OCI-LY7 (cell line): ENCODE measurements at regions of chr1 and their contacts with region 1.

Region 1: DNA sequence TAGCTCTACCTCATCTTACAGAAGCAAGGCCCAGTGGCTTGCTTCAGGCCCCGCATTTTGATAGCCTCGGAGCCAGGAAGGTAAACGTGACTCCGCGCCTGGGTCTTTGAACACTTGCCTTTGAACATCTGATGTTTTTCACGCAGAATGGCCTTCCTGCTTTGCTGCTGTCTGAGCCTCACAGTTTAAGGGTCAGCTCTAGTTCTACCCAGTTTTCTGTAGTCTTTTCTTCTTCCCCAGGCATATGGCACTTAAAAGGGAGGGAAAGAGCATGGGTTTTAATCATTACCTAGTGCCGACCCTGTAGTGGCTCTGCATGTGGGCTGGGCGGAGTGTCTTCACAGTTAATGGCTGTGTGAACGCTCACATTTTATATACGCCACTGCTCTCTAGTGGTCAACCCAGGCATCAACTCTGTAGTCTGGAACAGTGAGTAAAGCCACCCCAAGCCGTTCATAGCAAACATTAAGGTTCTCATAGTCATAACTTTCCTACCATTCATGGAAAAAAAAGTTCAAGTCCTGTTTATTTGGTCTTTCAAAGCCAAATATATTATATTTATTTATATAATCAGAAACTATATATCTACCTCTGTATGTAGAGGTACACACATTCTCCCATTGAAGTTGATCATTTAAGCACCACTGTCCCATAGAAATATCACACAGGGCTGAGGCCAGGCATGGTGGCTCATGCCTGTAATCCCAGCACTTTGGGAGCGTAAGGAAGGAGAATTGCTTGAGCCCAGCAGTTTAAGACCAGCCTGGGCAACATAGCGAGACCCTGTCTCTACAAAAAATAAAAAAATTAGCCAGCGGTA is 78.1 kb downstream of the IER5 start:
- DNase-seq: peak; percentile 74
- H3K4me3 ChIP-seq: no peak overlapping the region
- H3K27ac ChIP-seq: no peak overlapping the region
- H3K4me1 ChIP-seq: no peaks in the 10 kb centered on the region
- CTCF ChIP-seq: peak; percentile 90

Region 2: DNA sequence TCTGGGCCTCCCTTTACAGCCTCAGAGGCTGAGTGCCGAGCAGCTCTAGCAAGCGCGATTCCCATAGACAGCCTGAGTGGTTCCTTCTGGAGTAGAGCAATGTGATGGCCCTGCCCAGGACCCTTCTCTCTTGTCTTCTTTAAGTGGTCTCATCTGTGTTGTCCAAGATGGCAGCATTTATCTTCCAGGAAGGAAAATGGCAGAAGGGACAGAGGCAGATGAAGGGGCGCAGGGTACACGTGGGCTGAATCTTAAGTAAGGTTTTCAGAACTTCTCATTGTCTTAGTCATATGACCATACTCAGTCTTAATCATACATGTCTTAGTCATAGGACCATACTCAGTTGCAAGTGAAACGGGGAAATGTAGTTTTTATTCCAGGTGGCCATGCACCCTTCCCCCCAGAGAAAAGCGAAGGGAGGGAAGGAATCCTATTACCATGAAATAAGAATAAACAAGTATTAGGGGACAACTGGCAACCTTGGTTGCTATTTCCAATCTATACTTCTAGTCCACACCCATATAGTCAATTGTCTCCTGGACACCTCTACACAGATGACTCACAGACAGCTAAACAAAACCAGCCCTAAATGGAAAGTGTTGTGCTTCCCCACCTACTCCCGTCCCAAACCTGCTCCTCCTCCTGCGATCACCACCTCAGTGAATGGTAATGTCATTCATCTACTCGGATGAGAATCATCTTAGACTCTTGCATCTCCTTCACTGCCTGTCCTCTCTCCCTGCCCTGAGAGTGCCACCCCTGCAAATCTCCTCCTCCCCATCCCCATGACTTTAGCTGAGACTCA is 594.6 kb before region 1 on chr1:
- CTCF ChIA-PET with region 1: no interaction called
- POLR2A ChIA-PET with region 1: no interaction called
- intact Hi-C with region 1: no loop called
- DNase-seq: no peak
- H3K4me3 ChIP-seq: no peak overlapping the region
- H3K27ac ChIP-seq: no peak overlapping the region
- H3K4me1 ChIP-seq: no peaks in the 10 kb centered on the region
- CTCF ChIP-seq: no peak

Region 3: DNA sequence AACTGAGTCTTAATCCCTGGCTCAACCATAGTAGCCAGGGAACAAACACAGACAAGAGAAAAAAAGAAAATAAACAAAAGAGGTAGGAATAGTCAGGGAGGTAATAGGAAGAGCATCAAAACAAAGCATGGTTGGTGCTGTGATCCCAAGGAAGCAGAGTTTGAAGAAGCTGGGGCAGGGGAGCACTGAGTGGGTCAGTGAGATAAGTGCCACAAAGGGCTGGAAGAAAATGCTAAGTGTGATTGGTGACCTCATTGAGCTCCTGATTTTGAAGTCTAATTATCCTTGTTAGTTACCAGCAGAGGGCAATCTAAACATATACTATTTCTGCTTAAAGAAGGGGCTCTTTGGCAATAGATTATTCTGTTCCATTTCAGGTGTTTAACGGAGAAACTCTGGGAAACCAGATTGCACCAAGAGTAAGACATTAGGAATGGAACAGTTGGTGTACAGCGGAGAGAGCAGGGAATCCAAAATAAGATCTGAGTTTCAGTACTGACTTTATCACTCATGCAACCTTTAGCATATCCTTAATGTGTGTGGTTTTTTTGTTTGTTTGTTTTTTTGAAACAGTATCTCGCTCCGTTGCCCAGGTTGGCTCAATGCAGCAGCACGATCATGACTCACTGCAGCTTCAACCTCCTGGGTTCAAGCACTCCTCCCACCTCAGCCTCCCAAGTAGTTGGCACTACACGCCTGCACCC is 284.6 kb before region 1 on chr1:
- CTCF ChIA-PET with region 1: no interaction called
- POLR2A ChIA-PET with region 1: no interaction called
- intact Hi-C with region 1: loop called (anchors 1 kb)
- DNase-seq: peak; percentile 60
- H3K4me3 ChIP-seq: no peak overlapping the region
- H3K27ac ChIP-seq: no peak overlapping the region
- H3K4me1 ChIP-seq: no peaks in the 10 kb centered on the region
- CTCF ChIP-seq: peak; percentile 78

Region 4: GRCh38 chr1:181033799-181034451 is 132.7 kb before region 1 on chr1 and contains the start of gene MR1:
- CTCF ChIA-PET with region 1: no interaction called
- POLR2A ChIA-PET with region 1: no interaction called
- intact Hi-C with region 1: loop called (anchors 2 kb)
- DNase-seq: peak; percentile 93
- H3K4me3 ChIP-seq: peak within 1 kb of the TSS; percentile 81
- H3K27ac ChIP-seq: peak within 1 kb of the TSS; percentile 53
- H3K4me1 ChIP-seq: peaks cover 19% of the 10 kb centered on the region
- CTCF ChIP-seq: no peak
- total RNA-seq, gene MR1: 5.9 and 7.9 TPM in 2 replicates

Region 5: DNA sequence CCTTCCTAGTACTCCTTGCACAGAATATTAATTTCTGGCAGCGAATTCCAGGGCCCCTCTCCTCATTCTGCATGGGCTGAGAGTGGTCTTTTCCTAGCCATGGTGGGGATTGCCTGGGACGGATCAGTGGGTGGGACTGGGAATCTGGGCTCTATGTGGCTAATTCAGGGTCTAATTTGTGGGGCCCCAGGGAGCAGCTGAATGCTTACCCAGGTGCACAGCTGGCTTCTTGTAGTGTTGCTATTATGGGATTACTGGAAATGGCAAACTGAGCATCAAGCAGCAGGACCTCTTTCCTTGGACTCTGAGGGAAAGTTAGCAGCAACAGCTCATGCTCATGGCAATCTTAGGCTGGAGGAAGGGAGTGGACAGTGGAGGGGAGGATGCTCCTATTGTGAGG is 129.6 kb after region 1 on chr1:
- CTCF ChIA-PET with region 1: no interaction called
- POLR2A ChIA-PET with region 1: no interaction called
- intact Hi-C with region 1: no loop called
- DNase-seq: no peak
- H3K4me3 ChIP-seq: no peak overlapping the region
- H3K27ac ChIP-seq: no peak overlapping the region
- H3K4me1 ChIP-seq: no peaks in the 10 kb centered on the region
- CTCF ChIP-seq: no peak